ENCODE measurements at regions of chr4 and their contacts with region 1.

Region 1: DNA sequence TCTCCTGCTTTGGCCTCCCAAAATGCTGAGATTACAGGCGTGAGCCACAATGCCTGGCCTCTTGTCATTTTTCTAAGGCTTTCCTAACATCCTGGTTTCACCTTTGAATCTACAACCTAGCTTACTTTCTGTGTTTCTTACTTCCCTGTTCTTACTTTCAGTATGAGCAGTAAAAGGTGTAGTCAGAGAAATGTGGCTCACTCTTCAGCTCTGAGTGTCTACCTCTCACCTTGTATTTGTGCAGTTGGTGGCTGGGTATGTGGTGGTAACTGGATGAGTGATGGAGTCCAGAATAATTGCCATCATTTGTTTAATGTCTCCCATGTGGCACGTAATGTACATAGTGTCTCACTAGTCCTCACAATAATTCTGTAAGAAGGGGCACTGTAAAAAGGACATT is 19.1 kb upstream of the CXCL11 start:
- DNase-seq: no peak
- H3K4me3 Mint-ChIP-seq: no peak overlapping the region
- H3K27ac Mint-ChIP-seq: no peak overlapping the region
- H3K4me1 Mint-ChIP-seq: peaks cover 40% of the 10 kb centered on the region
- H3K27me3 Mint-ChIP-seq: no peaks in the 10 kb centered on the region

Region 2: DNA sequence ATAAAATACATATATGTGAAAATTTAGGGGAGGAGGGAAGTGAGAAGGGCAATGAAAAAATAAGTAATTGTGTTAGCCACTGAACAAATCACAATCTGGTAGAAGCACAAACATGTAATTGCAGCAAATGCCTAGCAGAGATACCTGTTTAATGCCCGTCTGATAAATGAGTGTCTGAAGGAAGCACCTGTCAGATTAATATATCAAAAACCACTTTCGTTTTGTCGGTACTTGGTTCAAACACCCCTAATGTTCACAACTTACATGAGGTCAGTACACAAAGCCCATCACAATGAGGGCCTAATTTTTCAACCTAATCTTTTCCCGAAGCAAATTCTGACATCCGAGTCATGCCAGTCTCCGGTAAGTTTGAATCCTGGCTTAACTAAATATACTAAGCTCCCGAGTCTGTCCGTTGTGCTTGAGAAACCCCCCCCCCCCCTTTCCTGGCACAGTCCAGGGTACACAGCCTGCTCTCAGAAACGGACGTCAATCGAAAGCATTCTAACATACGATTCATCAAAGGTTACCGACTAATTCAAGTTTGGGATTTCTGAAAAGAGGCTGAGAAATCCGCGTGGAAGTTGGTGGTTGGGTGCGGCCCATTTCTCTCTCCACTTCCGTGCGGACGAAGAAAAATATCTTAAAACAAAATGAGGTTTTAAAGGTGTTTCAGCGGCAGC is 65.0 kb before region 1 on chr4:
- intact Hi-C with region 1: no loop called
- DNase-seq: no peak
- H3K4me3 Mint-ChIP-seq: peak overlapping the region; percentile 87
- H3K27ac Mint-ChIP-seq: peak overlapping the region; percentile 62
- H3K4me1 Mint-ChIP-seq: peaks cover 25% of the 10 kb centered on the region
- H3K27me3 Mint-ChIP-seq: no peaks in the 10 kb centered on the region

Region 3: GRCh38 chr4:76028350-76028765 is 26.7 kb before region 1 on chr4:
- intact Hi-C with region 1: loop called (anchors 1 kb)
- DNase-seq: no peak
- H3K4me3 Mint-ChIP-seq: no peak overlapping the region
- H3K27ac Mint-ChIP-seq: no peak overlapping the region
- H3K4me1 Mint-ChIP-seq: peaks cover 28% of the 10 kb centered on the region
- H3K27me3 Mint-ChIP-seq: peaks cover 8% of the 10 kb centered on the region

Region 4: GRCh38 chr4:76036855-76037254 is 18.2 kb before region 1 on chr4:
- intact Hi-C with region 1: loop called (anchors 1 kb)
- DNase-seq: no peak
- H3K4me3 Mint-ChIP-seq: no peak overlapping the region
- H3K27ac Mint-ChIP-seq: no peak overlapping the region
- H3K4me1 Mint-ChIP-seq: peaks cover 21% of the 10 kb centered on the region
- H3K27me3 Mint-ChIP-seq: peaks cover 2% of the 10 kb centered on the region

Region 5: DNA sequence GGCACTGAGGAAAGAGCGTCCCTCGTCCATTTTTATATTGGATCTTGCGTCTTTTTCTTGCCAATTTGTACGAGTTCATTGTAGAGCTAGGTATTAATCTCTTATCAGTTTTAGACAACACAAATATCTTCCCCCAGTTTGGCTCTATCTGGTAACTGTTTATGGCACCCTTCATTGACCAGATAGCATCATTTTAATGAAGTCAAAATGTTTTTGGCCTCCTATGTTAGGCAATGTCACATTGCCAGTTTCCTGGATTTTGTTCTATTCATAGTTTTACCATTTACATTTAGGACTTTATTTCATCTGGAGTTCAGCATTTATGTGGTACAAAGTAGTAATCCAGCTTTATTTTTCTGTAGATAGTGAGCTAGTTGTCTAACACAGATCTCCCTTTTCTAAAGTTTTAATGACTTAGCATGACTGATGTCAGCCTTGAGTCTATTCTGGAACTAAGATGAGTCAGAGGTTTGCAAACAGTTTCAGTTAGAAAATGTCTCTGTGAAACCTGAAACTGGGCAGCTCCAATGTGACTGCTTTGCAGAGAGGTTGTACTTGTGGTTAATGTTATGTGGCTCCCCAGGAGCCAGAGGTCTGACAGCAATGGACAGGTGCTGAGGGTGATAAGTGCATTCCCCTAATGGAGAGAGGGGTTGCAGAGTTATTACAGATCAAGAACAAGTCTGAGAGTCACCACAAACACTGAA is 246.2 kb after region 1 on chr4:
- intact Hi-C with region 1: loop called (anchors 5 kb)
- DNase-seq: peak; percentile 37
- H3K4me3 Mint-ChIP-seq: no peak overlapping the region
- H3K27ac Mint-ChIP-seq: peak overlapping the region; percentile 5
- H3K4me1 Mint-ChIP-seq: peaks cover 49% of the 10 kb centered on the region
- H3K27me3 Mint-ChIP-seq: peaks cover 9% of the 10 kb centered on the region